Adrenal gland (tissue), 19 donors: ENCODE measurements at regions of chr19 and their contacts with region 1.

Region 1: DNA sequence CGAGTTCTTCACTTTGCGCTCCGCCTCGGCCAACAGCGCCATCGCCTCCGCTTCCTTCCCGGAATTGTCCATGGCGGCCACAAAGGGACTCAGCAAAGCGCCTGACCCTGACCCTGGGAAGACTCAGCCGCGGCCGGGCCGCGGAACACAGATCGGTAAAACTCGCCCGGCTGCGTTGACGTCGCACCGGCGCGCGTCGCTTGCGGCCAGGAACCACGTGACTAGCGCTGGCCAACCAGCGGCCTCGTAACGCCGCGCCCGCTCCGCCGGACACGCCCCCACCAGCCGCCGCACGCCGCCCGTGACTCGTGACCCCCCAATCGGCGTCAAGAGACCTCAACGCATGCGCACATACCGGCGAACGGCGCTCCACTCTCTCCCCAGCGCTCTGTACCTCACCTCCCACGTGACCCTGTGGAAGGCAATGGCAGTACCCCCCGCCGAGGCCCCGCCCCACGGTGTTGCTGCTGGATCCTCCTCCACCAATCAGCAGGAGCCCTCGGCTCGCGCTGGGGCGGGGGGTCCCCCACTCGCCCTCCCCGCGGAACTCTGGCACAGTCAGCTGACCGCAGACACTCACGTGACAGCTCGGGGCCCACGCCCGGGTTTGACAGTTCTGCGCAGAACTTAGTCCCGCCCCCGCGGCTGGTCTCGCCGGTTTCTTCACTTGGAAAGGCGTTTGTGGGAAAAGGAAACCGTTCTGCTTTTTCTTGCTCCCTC is at the start of gene NAPA:
- DNase-seq: peak; percentile 100
- H3K4me3 ChIP-seq: peak within 1 kb of the TSS; percentile 69 to 98 (median 86)
- H3K27ac ChIP-seq: peak within 1 kb of the TSS; percentile 96 to 100 (median 99)
- H3K4me1 ChIP-seq: peaks cover 37 to 45% of the 10 kb centered on the region in 2 donors
- H3K27me3 ChIP-seq: no peaks in the 10 kb centered on the region
- CTCF ChIP-seq: no peak
- POLR2A ChIP-seq: peak; percentile 97 to 98
- total RNA-seq, gene NAPA: 122 to 481 (median 265) TPM

Region 2: DNA sequence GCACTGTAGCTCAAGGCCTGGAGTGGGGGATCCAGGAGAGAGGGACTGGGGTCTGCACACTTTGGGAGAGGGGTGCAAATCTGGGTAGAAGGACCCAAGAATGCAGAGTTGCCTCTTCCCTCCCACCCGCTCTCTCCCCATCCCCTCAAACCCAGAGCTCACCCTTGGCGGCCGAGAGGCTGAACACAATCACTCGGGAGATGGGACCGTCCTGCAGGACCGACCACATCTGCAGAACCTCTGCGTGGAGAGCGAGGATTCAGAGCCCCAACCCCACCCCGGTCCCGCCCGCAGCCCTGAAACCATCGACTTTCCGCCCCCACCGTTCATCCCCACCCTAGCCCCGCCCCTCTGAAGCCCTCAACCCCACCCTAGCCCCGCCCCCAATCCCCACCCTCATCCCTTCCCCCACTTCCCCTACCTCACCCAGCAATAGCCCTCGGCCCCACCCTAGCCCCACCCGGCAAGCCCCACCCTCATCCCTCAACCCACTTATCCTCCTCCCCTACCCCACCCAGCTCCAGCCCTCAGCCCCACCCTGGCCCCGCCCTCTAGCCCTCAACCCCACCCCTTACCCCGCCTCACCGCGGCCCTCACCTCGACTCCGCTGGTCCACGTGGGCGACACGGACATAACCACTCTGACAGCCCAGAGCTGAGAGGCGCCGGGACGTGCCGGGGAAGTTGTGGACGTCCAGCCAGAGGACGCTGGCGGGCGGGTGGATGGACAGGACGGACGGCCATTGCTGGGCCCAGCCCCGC is 35.1 kb before region 1 on chr19:
- intact Hi-C with region 1: no loop called
- DNase-seq: peak in 1 of 7 donors; percentile 21
- H3K4me3 ChIP-seq: no peak overlapping the region
- H3K27ac ChIP-seq: no peak overlapping the region
- H3K4me1 ChIP-seq: peaks cover 7 to 9% of the 10 kb centered on the region in 2 donors
- H3K27me3 ChIP-seq: no peaks in the 10 kb centered on the region
- CTCF ChIP-seq: no peak
- POLR2A ChIP-seq: no peak

Region 3: DNA sequence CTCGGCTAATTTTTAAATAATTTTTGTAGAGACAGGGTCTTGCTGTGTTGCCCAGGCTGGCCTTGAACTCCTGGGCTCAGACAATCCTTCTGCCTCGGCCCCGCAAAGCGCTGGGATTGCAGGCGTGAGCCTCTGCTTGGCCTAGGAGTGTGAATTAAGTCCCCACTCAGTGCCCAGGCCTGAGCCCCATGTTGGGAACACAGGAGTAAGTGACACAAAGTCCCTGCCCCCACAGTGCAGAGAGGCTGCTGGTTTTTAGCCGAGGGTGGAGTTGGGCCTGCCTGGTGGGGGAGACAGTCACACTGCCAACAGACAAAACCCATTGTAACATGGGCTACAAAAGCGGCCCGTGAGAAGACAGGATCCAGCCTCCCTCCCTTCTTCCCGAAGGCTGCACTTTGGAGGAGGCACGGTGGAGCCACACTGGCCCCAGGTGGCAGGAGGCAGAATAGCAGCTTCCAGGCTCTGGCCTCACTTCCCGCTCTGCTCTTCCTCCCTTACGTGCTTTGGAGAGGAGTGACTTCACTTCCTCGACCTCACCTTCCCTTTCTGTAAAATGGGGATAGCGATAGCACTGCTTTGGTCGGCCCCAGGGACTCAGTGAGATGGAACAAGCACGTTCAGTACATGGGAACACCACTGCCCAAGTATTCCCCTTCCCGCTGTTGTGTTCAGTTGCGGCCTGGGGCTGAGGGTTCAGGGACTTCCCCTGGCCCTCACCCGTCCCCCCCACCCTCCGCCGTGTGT is 183.0 kb after region 1 on chr19:
- intact Hi-C with region 1: loop called in 1 of 2 experiments (anchors 10 kb)
- DNase-seq: peak; percentile 78 to 90 (median 87)
- H3K4me3 ChIP-seq: no peak overlapping the region
- H3K27ac ChIP-seq: peak overlapping the region; percentile 19 to 77 (median 50)
- H3K4me1 ChIP-seq: peaks cover 4 to 6% of the 10 kb centered on the region in 2 donors
- H3K27me3 ChIP-seq: no peaks in the 10 kb centered on the region
- CTCF ChIP-seq: peak; percentile 95 to 100 (median 99)
- POLR2A ChIP-seq: no peak